ENCODE measurements at regions of chr6 and their contacts with region 1.

Region 1: GRCh38 chr6:43070028-43070632 is 6.0 kb upstream of the PTK7 start:
- DNase-seq: no peak
- H3K4me3 ChIP-seq: no peak overlapping the region
- H3K27ac ChIP-seq: no peak overlapping the region
- H3K4me1 ChIP-seq: no peaks in the 10 kb centered on the region
- H3K27me3 ChIP-seq: no peaks in the 10 kb centered on the region
- CTCF ChIP-seq: peak; percentile 34

Region 2: DNA sequence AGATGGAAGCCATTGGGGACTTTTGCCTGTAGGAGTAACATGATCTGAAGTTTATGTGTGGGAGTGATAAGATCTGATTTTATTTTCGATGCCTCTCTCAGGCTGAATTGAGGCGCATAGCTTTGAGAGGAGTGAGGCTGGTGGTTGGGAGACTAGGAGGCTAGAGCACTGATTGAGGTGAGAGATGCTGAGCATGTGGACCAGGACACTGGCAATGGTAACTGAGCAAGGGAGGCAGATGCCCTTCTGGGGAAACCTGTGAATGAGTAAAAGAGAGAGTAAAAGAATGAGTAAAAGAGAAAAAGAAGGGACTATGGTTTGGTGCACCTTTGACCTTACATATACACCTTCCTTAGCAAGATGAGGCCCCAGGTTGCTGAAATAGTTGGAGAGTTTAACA is 45.7 kb before region 1 on chr6:
- intact Hi-C with region 1: no loop called
- DNase-seq: no peak
- H3K4me3 ChIP-seq: no peak overlapping the region
- H3K27ac ChIP-seq: no peak overlapping the region
- H3K4me1 ChIP-seq: peaks cover 4% of the 10 kb centered on the region
- H3K27me3 ChIP-seq: no peaks in the 10 kb centered on the region
- CTCF ChIP-seq: no peak

Region 3: DNA sequence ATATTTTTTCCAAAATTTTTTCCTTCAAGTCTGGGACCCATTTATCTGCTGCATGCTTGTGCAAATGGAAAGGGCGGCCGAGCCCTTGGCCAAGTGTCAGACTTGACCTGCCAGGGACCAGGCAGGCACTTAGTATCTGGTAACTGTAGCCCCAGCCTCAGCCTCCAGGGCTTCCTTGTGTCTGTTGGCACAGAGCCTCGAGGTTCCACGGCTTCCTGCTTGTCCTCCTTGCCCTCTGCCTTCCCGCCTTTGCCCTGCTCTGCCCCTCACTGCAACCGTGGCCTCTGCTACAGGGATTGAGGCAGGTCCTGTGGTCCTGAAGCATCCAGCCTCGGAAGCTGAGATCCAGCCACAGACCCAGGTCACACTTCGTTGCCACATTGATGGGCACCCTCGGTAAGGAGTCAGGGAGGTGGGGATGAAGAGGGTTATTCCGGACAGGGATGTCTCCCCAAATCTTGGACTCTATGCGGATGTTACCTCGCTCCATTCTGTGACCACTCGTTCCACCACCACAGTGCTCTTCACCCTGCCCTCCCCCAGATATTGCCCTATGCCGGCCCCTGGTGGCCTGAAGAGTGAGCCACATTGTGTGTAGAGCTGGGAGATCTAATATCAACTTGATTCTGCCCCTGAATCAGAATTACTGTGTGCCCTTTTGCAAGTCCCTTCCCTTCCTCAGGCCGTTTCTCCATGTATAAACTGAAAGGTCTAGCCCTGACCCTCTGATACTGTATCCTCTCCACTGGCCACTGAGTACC is 59.5 kb after region 1 on chr6:
- intact Hi-C with region 1: loop called (anchors 5 kb)
- DNase-seq: peak; percentile 46
- H3K4me3 ChIP-seq: no peak overlapping the region
- H3K27ac ChIP-seq: no peak overlapping the region
- H3K4me1 ChIP-seq: no peaks in the 10 kb centered on the region
- H3K27me3 ChIP-seq: no peaks in the 10 kb centered on the region
- CTCF ChIP-seq: peak; percentile 34

Region 4: DNA sequence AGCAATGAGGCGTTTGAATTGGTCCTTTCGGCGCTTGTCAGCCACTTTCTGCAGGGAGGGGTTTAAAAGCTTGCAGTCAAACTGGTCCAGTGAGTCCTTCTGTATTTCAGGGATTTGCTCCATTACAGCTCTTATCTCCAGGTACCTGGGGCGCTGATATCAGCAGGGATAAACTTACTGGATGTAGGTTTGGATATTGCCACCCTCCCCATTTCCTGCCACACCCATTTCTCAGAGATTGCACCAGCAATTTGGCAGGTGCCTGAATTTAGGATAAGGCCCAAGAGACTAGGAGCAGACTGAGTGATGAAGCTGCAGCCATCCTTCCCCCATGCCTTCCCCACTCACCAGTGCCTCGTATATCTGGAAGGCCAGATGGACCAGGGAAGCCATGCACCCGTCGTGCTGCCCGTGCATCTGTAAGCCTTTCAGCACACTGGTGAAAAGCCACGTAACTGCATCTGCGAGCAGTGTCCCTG is 454.4 kb after region 1 on chr6:
- intact Hi-C with region 1: no loop called
- DNase-seq: no peak
- H3K4me3 ChIP-seq: no peak overlapping the region
- H3K27ac ChIP-seq: no peak overlapping the region
- H3K4me1 ChIP-seq: no peaks in the 10 kb centered on the region
- H3K27me3 ChIP-seq: no peaks in the 10 kb centered on the region
- CTCF ChIP-seq: no peak